ENCODE measurements at regions of chr12 and their contacts with region 1.

Region 1: DNA sequence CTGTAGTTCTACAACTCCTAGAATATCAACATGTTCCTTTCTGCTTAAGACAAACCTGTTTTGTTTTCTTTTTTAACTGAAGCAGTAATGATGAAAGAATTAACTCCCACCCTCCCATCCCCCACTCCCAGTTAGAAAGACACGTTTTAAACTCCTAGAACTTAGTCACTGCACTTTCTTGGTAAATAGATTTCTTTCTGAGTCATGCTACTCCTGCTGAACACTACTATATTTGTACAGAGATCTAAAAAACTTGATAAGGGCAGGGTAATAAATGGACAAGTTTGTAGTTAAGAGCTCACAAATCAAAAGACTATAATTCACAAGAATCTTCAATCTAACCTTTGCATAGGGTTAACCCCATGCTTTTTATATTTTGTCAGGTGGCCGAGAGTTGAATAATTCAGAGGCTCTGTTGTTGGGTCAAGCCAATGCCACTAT is 118.9 kb upstream of the PTPRB start:
- DNase-seq: peak in 1 of 2 experiments; percentile 16
- H3K4me3 ChIP-seq: no peak overlapping the region
- H3K4me3 Mint-ChIP-seq: peak overlapping the region; percentile 32
- H3K27ac Mint-ChIP-seq: peak overlapping the region; percentile 39
- H3K4me1 ChIP-seq: peaks cover 28% of the 10 kb centered on the region
- H3K4me1 Mint-ChIP-seq: peaks cover 6% of the 10 kb centered on the region
- H3K27me3 ChIP-seq: no peaks in the 10 kb centered on the region
- H3K27me3 Mint-ChIP-seq: no peaks in the 10 kb centered on the region
- CTCF ChIP-seq: no peak

Region 2: GRCh38 chr12:70744133-70744532 is 12.0 kb before region 1 on chr12:
- CTCF ChIA-PET with region 1: no interaction called
- POLR2A ChIA-PET with region 1: no interaction called
- intact Hi-C with region 1: no loop called
- DNase-seq: no peak
- H3K4me3 ChIP-seq: no peak overlapping the region
- H3K4me3 Mint-ChIP-seq: no peak overlapping the region
- H3K27ac Mint-ChIP-seq: no peak overlapping the region
- H3K4me1 ChIP-seq: no peaks in the 10 kb centered on the region
- H3K4me1 Mint-ChIP-seq: peaks cover 7% of the 10 kb centered on the region
- H3K27me3 ChIP-seq: no peaks in the 10 kb centered on the region
- H3K27me3 Mint-ChIP-seq: no peaks in the 10 kb centered on the region
- CTCF ChIP-seq: no peak

Region 3: GRCh38 chr12:70794126-70794525 is 38.0 kb after region 1 on chr12:
- CTCF ChIA-PET with region 1: no interaction called
- POLR2A ChIA-PET with region 1: no interaction called
- intact Hi-C with region 1: loop called (anchors 1 kb)
- DNase-seq: peak in 1 of 2 experiments; percentile 14
- H3K4me3 ChIP-seq: no peak overlapping the region
- H3K4me3 Mint-ChIP-seq: no peak overlapping the region
- H3K27ac Mint-ChIP-seq: peak overlapping the region; percentile 16
- H3K4me1 ChIP-seq: no peaks in the 10 kb centered on the region
- H3K4me1 Mint-ChIP-seq: peaks cover 14% of the 10 kb centered on the region
- H3K27me3 ChIP-seq: no peaks in the 10 kb centered on the region
- H3K27me3 Mint-ChIP-seq: no peaks in the 10 kb centered on the region
- CTCF ChIP-seq: no peak

Region 4: DNA sequence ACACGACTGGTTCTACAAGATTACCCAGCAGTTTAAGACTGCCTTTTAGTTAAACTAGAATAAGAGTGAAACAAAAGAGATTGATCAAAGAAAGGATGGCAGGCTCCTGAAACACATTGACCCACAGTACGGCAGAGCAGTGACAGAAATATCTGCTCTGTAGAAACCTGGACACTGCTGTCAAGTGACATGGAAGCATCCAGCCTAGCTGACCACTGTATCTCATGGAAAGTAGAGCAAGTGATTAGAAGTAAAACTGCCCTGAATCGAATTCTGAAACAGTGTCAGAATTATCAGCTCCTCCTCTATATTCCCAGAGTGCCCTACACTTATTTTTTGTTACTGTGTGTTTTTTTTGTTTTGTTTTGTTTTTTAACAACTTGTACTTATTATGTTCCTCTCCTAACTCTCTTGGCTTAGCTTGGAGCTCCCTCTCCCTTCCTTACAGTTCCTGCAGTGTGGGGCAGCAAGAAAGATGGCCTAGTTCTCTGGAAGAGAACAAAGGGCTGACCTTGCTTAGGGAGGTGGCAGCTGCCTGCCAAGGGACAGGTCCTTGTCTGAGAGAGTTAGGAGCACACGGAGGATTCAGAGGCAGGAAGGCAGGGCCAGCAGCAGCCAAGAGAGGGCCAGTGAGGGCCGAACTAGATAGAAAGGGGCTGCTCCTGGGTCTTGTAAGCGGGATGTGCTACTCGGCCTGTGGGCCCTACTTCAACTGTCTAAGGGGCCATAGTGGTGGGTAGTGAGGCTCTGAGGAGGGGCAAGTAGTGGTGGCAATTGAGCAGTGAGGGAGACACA is 67.2 kb after region 1 on chr12:
- CTCF ChIA-PET with region 1: no interaction called
- POLR2A ChIA-PET with region 1: no interaction called
- intact Hi-C with region 1: loop called (anchors 5 kb)
- DNase-seq: no peak
- H3K4me3 ChIP-seq: no peak overlapping the region
- H3K4me3 Mint-ChIP-seq: no peak overlapping the region
- H3K27ac Mint-ChIP-seq: peak overlapping the region; percentile 43
- H3K4me1 ChIP-seq: peaks cover 18% of the 10 kb centered on the region
- H3K4me1 Mint-ChIP-seq: peaks cover 34% of the 10 kb centered on the region
- H3K27me3 ChIP-seq: no peaks in the 10 kb centered on the region
- H3K27me3 Mint-ChIP-seq: no peaks in the 10 kb centered on the region
- CTCF ChIP-seq: no peak

Region 5: DNA sequence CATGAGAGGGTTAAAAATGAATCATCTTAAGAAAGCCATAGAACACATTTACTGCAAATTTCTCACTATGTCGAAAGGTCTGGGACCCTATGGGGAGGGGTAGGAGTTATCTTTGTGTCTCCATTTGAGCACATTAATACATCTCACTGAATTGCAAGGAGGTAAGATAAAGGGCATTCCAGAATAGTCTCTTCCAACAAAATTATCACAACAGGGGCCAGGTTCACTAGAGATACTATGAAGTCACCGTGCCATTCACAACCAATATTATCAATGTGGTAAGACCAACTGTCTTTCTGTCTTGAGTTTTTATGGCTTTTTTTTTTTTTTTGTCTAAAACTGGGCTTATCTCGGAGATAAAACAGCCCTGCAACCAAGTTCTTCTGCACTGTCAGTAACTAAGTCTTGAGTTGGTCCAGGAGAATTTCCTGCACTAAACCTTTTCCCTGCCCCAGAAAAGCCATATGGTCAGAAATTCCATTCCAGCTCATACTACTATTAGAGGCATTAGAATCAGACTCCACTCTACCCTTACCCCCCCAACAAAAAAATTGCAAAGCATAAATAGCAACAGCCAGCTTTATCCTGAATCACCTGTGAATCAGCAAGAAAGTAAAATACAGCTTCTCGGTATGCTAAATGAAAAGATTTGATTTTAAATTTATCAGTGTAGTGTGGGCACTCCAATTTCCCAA is 84.6 kb after region 1 on chr12:
- CTCF ChIA-PET with region 1: no interaction called
- POLR2A ChIA-PET with region 1: no interaction called
- intact Hi-C with region 1: loop called (anchors 1 kb)
- DNase-seq: peak in 1 of 2 experiments; percentile 44
- H3K4me3 ChIP-seq: no peak overlapping the region
- H3K4me3 Mint-ChIP-seq: no peak overlapping the region
- H3K27ac Mint-ChIP-seq: peak overlapping the region; percentile 48
- H3K4me1 ChIP-seq: peaks cover 31% of the 10 kb centered on the region
- H3K4me1 Mint-ChIP-seq: peaks cover 21% of the 10 kb centered on the region
- H3K27me3 ChIP-seq: no peaks in the 10 kb centered on the region
- H3K27me3 Mint-ChIP-seq: no peaks in the 10 kb centered on the region
- CTCF ChIP-seq: no peak

Region 6: DNA sequence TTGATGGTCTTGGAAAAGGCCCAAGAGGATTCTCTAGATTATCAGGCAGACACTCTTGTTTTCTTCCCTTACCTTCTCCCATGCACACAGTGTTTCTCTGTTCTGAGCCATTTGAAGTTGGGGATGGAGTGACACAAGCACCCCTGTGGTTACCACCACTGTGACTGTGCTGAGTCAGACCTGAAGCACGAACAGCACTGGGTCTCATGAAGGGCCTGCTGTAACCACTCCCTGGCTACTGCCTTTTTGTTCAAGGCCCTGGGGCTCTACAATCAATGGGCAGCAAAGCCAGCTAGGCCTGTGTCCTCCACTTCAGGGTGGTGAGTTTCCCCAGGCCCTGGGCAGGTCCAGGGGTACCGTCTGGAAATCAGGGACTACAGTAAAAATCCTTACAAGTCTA is 336.1 kb after region 1 on chr12:
- CTCF ChIA-PET with region 1: no interaction called
- POLR2A ChIA-PET with region 1: no interaction called
- intact Hi-C with region 1: no loop called
- DNase-seq: no peak
- H3K4me3 ChIP-seq: no peak overlapping the region
- H3K4me3 Mint-ChIP-seq: no peak overlapping the region
- H3K27ac Mint-ChIP-seq: no peak overlapping the region
- H3K4me1 ChIP-seq: no peaks in the 10 kb centered on the region
- H3K4me1 Mint-ChIP-seq: no peaks in the 10 kb centered on the region
- H3K27me3 ChIP-seq: no peaks in the 10 kb centered on the region
- H3K27me3 Mint-ChIP-seq: no peaks in the 10 kb centered on the region
- CTCF ChIP-seq: no peak